Esophagus muscularis mucosa (tissue), 4 donors: ENCODE measurements at regions of chr12 and their contacts with region 1.

Region 1: GRCh38 chr12:43338848-43339526 is 213.0 kb downstream of the ADAMTS20 start:
- DNase-seq: no peak
- H3K4me3 ChIP-seq: no peak overlapping the region
- H3K27ac ChIP-seq: peak overlapping the region; percentile 21 to 56 (median 46)
- H3K4me1 ChIP-seq: peaks cover 7 to 14% (median 9%) of the 10 kb centered on the region in 4 donors
- H3K27me3 ChIP-seq: no peaks in the 10 kb centered on the region
- CTCF ChIP-seq: peak; percentile 62 to 75 (median 62)
- EP300 ChIP-seq: no peak
- POLR2A ChIP-seq: no peak

Region 2: DNA sequence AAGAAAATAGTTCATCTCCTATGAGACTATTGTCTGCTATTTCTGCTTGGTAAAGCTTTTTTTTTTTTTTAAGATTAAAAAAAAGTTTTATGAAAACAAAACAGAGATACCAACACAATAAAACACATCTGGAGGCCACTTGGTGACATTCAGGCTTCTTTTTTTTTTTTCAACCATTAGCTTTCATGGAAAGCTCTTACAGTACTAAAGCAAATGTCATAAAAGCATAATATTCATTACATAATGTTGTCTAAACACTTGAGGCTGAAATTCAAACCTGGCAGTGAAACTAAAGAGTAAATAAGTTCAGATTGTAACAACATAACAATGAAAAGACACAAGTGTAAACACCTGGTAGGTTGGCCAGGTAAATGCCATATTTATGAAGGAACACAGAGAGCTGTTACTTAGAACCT is 764.1 kb before region 1 on chr12:
- intact Hi-C with region 1: loop called (anchors 10 kb)
- DNase-seq: no peak
- H3K4me3 ChIP-seq: no peak overlapping the region
- H3K27ac ChIP-seq: no peak overlapping the region
- H3K4me1 ChIP-seq: peaks cover 0 to 18% (median 11%) of the 10 kb centered on the region in 4 donors
- H3K27me3 ChIP-seq: no peaks in the 10 kb centered on the region
- CTCF ChIP-seq: no peak
- EP300 ChIP-seq: no peak
- POLR2A ChIP-seq: no peak